ENCODE measurements at regions of chr3 and their contacts with region 1.

Region 1: GRCh38 chr3:79361748-79362378 is 405.9 kb downstream of the ROBO1 start:
- DNase-seq: no peak
- H3K4me3 ChIP-seq: no peak overlapping the region
- H3K27ac ChIP-seq: no peak overlapping the region
- H3K4me1 ChIP-seq: no peaks in the 10 kb centered on the region
- H3K27me3 ChIP-seq: no peaks in the 10 kb centered on the region
- CTCF ChIP-seq: peak; percentile 73

Region 2: GRCh38 chr3:78978037-78978436 is 383.8 kb before region 1 on chr3:
- intact Hi-C with region 1: no loop called
- DNase-seq: no peak
- H3K4me3 ChIP-seq: no peak overlapping the region
- H3K27ac ChIP-seq: no peak overlapping the region
- H3K4me1 ChIP-seq: no peaks in the 10 kb centered on the region
- H3K27me3 ChIP-seq: no peaks in the 10 kb centered on the region
- CTCF ChIP-seq: no peak

Region 3: DNA sequence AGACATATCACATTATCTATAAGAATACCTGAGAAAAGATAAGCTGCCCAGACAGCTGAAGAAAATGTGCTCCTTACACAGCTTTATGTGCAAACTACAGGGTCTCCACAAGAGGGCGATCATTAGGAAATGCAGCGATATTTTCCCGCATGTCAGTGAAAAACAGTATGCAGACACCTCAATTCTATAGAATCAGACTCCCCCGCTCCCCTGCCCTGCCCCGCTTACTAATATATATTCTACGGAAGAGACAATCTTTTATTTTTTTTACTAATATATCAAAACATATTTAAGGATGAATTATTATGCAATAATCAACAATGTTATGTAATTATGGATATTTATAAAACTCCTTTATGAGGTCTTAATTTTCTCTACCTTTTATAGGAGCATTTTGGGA is 275.3 kb before region 1 on chr3:
- intact Hi-C with region 1: loop called (anchors 5 kb)
- DNase-seq: peak; percentile 35
- H3K4me3 ChIP-seq: no peak overlapping the region
- H3K27ac ChIP-seq: no peak overlapping the region
- H3K4me1 ChIP-seq: no peaks in the 10 kb centered on the region
- H3K27me3 ChIP-seq: no peaks in the 10 kb centered on the region
- CTCF ChIP-seq: peak; percentile 59

Region 4: GRCh38 chr3:79531561-79532270 is 169.9 kb after region 1 on chr3:
- intact Hi-C with region 1: no loop called
- DNase-seq: no peak
- H3K4me3 ChIP-seq: no peak overlapping the region
- H3K27ac ChIP-seq: no peak overlapping the region
- H3K4me1 ChIP-seq: no peaks in the 10 kb centered on the region
- H3K27me3 ChIP-seq: no peaks in the 10 kb centered on the region
- CTCF ChIP-seq: no peak